Activated CD4-positive, alpha-beta memory T cell treated with anti-CD3 and anti-CD28 coated beads for 36 hours (primary cell): ENCODE measurements at regions of chr16 and their contacts with region 1.

Region 1: DNA sequence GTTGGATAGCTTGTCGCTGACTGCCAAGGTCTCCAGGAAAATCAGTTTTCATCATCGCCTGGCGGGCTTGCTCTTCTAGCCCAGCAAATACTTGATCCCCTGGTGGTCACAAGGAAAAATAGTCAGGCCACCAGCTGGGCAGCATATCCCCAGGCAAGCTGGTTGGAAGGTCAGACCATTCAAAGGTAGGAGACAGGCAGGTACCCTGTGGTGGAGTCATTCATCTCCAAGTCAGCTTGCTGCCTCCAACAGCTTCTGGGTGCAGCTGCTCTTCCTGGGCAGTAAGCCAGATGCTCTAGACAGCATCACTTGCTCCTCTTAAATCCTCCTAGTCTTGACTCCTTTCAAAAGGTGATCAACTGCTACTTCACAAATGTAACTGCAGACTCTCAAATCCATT is 16.0 kb downstream of the ZNF821 start:
- DNase-seq: no peak
- H3K4me3 Mint-ChIP-seq: no peak overlapping the region
- H3K27ac Mint-ChIP-seq: no peak overlapping the region
- H3K4me1 Mint-ChIP-seq: peaks cover 34% of the 10 kb centered on the region
- H3K27me3 Mint-ChIP-seq: no peaks in the 10 kb centered on the region

Region 2: DNA sequence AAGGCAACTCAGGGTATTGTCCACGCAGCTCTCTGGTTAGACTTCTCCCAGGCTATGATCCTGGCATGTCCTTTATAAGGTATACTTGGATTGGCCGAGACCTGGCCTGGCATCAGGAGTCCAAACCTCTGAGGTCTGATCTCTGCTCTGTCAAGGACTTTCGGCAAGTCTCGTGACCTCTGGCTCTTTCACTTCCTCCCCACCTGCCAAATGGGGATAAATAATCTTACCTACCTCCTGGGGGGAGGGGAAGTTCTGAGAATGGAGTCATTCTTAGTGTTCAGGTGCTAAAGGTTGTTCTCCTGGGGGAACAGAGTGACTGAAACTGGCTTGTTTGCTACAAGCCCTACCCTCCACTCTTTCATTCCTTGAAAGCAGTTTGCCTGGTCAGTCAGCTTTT is 14.5 kb before region 1 on chr16:
- CTCF ChIA-PET with region 1: interaction called, 4 read pairs
- POLR2A ChIA-PET with region 1: no interaction called
- intact Hi-C with region 1: loop called (anchors 1 kb)
- DNase-seq: no peak
- H3K4me3 Mint-ChIP-seq: no peak overlapping the region
- H3K27ac Mint-ChIP-seq: peak overlapping the region; percentile 67
- H3K4me1 Mint-ChIP-seq: peaks cover 52% of the 10 kb centered on the region
- H3K27me3 Mint-ChIP-seq: no peaks in the 10 kb centered on the region

Region 3: DNA sequence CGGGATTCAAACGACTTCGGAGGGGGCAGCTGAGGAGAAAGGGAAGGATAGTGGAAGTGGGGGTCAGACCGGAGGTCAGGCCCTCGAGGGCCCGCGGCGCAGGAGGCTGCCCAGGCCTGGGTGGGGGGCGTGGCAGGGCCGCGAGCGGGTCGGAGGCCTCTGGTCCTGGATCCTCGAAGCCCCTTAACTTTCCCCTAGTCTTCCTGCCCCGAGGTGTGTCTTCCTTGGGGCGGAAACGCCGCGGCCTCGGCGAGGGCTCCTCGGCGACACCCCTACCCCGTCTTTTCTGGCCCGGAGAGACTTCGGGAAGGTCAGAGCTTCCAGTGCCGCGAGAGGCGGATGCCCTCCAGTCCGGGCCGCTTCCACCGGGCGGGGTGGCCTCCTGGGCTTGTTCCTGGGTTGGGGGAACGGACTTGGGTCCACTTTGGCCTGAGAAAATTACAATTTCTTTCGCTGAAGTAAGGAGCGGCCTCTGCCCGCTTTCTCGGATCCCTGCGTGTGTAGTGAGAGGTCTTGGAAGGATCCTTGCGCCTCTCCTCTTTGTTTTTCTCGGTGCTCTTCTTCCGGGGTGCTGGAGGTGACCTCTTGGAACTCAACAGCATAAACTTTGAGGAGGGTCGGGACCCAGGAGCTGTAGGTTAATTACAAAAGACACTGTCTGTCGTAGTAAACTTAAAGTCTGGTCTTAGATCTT is 27.9 kb after region 1 on chr16:
- CTCF ChIA-PET with region 1: no interaction called
- POLR2A ChIA-PET with region 1: no interaction called
- intact Hi-C with region 1: no loop called
- DNase-seq: peak; percentile 52
- H3K4me3 Mint-ChIP-seq: peak overlapping the region; percentile 95
- H3K27ac Mint-ChIP-seq: peak overlapping the region; percentile 97
- H3K4me1 Mint-ChIP-seq: peaks cover 30% of the 10 kb centered on the region
- H3K27me3 Mint-ChIP-seq: no peaks in the 10 kb centered on the region